Activated CD4-positive, alpha-beta T cell treated with anti-CD3 and anti-CD28 coated beads, Interleukin-2, amount 10 ng/mL, durations not matched to agents 24 days and 14 days (primary cell): ENCODE measurements at regions of chr13 and their contacts with region 1.

Region 1: GRCh38 chr13:42333613-42334328 is 61.8 kb downstream of the AKAP11 start:
- DNase-seq: peak; percentile 66
- H3K4me3 Mint-ChIP-seq: no peak overlapping the region
- H3K27ac Mint-ChIP-seq: peak overlapping the region; percentile 76
- H3K4me1 Mint-ChIP-seq: peaks cover 35% of the 10 kb centered on the region
- H3K27me3 Mint-ChIP-seq: no peaks in the 10 kb centered on the region

Region 2: GRCh38 chr13:42312817-42313431 is 20.8 kb before region 1 on chr13:
- intact Hi-C with region 1: no loop called
- DNase-seq: no peak
- H3K4me3 Mint-ChIP-seq: no peak overlapping the region
- H3K27ac Mint-ChIP-seq: no peak overlapping the region
- H3K4me1 Mint-ChIP-seq: peaks cover 8% of the 10 kb centered on the region
- H3K27me3 Mint-ChIP-seq: no peaks in the 10 kb centered on the region

Region 3: GRCh38 chr13:42345367-42345766 is 11.6 kb after region 1 on chr13:
- intact Hi-C with region 1: no loop called
- DNase-seq: no peak
- H3K4me3 Mint-ChIP-seq: no peak overlapping the region
- H3K27ac Mint-ChIP-seq: no peak overlapping the region
- H3K4me1 Mint-ChIP-seq: peaks cover 44% of the 10 kb centered on the region
- H3K27me3 Mint-ChIP-seq: no peaks in the 10 kb centered on the region

Region 4: DNA sequence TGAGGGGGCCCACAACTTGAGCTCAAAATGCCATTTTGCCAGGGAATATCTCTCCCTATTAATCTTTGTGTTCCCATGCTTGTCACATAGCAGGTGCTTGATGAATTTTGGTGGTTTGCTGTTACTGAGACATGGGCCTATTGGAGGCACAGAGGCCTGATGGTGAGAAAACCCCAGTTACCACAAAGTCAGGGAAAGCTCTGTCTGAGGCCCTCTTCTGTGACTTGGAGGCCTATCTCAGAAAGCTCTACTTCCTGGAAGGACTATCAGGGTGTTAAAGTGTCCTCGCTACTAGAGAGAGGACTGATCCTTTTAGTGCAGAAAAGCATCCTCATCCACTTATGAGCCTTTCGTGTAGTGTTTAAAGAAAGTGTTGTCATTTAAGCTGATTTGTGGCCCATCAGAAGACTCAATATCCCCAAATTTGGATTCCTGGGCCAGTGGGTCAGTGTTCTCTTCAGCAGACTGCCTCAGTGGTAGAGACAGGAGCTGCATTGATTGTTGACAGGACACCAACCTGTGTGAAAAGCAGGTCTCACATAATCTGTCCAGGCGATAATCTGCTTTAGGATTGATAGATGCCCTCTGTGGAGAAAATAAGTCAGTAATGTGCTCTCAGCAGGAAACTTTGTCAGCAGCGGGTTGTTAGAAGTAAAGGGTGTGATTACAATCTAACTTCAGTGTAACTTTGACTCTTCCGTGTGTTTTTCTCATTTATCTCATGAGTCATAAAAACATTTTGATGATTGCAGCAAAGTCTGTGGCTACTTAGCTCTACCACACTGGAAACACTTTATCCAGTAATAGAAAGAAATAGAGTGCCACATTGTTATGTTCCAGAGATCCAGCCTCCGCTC is 59.2 kb after region 1 on chr13:
- intact Hi-C with region 1: loop called (anchors 5 kb)
- DNase-seq: peak; percentile 86
- H3K4me3 Mint-ChIP-seq: peak overlapping the region; percentile 91
- H3K27ac Mint-ChIP-seq: peak overlapping the region; percentile 97
- H3K4me1 Mint-ChIP-seq: peaks cover 76% of the 10 kb centered on the region
- H3K27me3 Mint-ChIP-seq: no peaks in the 10 kb centered on the region

Region 5: DNA sequence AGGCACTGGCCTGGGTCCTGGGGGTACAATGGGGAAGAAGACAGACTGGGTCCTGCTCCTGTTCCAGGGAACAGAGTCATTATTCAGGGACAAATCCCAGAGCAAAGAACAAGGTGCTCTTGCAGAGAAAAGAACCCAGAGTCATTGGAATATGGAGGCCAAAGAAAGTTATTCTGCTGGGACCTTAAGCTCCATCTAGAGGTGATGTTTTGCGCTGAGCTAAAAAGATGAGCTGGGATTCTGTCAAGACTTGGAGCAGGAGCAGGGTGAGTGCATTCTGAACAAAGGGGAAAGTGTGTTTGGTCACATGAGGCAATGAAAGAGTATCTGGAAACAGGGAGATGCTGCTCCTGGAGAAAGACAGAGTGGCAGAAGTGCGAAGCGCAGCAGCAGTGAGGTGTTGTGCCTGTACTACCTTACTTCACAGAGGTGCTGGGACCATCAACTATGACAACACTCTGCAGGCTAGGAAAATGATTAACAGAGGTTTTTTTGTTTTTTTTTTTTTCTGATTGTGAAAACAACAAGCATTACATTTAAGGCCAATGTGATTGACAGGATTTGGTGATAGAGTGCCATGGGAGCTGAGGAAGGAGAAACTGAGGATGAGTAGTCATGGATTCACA is 144.9 kb after region 1 on chr13:
- intact Hi-C with region 1: loop called (anchors 5 kb)
- DNase-seq: peak; percentile 67
- H3K4me3 Mint-ChIP-seq: no peak overlapping the region
- H3K27ac Mint-ChIP-seq: no peak overlapping the region
- H3K4me1 Mint-ChIP-seq: peaks cover 18% of the 10 kb centered on the region
- H3K27me3 Mint-ChIP-seq: no peaks in the 10 kb centered on the region

Region 6: GRCh38 chr13:42594970-42595571 is 261.3 kb after region 1 on chr13:
- intact Hi-C with region 1: loop called (anchors 1 kb)
- DNase-seq: peak; percentile 85
- H3K4me3 Mint-ChIP-seq: no peak overlapping the region
- H3K27ac Mint-ChIP-seq: no peak overlapping the region
- H3K4me1 Mint-ChIP-seq: no peaks in the 10 kb centered on the region
- H3K27me3 Mint-ChIP-seq: peaks cover 6% of the 10 kb centered on the region

Region 7: GRCh38 chr13:42847891-42848663 is 514.3 kb after region 1 on chr13:
- intact Hi-C with region 1: no loop called
- DNase-seq: no peak
- H3K4me3 Mint-ChIP-seq: no peak overlapping the region
- H3K27ac Mint-ChIP-seq: no peak overlapping the region
- H3K4me1 Mint-ChIP-seq: no peaks in the 10 kb centered on the region
- H3K27me3 Mint-ChIP-seq: peaks cover 32% of the 10 kb centered on the region